Endothelial cell of umbilical vein (primary cell): ENCODE measurements at regions of chr20 and their contacts with region 1.

Region 1: DNA sequence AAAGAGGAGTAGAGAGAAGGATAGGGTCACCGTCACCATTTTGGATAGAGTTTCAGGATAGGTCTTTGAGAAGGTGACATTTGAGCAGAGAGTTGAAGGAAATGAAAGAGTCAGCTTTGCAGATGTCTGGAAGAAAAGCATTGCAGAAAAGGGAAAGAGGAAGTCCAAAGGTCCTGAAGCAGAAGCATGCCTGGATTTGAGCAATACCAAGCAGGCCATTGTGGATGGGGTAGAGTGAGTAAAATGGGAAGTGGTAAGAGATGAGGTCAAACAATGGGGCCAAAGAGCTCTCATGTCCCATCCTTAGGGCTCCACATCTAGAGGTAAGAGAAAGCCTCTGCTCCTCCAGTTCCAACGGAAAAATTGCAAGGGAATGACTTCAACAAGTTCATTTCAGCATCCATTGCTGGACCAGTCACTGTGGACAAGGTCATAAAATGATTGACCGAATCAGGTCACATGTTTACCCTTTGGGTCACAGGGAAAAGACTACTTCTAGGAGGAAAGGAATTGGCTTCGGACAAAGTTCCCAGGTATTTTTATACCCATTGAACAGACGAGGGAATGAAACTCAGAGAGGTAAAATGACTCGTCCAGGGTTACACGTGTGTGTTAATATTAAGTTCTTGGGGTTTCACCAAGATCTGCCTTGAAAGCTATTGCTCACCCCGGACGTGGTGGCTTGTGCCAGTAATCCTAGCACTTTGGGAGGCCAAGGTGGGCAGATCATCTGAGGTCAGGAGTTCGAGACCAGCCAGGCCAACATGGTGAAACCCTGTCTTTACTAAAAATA is 6.6 kb upstream of the SAMHD1 start:
- DNase-seq: no peak
- H3K4me3 ChIP-seq: no peak overlapping the region
- H3K27ac ChIP-seq: no peak overlapping the region
- H3K4me1 ChIP-seq: no peaks in the 10 kb centered on the region
- H3K27me3 ChIP-seq: no peaks in the 10 kb centered on the region
- CTCF ChIP-seq: no peak
- POLR2A ChIP-seq: no peak

Region 2: DNA sequence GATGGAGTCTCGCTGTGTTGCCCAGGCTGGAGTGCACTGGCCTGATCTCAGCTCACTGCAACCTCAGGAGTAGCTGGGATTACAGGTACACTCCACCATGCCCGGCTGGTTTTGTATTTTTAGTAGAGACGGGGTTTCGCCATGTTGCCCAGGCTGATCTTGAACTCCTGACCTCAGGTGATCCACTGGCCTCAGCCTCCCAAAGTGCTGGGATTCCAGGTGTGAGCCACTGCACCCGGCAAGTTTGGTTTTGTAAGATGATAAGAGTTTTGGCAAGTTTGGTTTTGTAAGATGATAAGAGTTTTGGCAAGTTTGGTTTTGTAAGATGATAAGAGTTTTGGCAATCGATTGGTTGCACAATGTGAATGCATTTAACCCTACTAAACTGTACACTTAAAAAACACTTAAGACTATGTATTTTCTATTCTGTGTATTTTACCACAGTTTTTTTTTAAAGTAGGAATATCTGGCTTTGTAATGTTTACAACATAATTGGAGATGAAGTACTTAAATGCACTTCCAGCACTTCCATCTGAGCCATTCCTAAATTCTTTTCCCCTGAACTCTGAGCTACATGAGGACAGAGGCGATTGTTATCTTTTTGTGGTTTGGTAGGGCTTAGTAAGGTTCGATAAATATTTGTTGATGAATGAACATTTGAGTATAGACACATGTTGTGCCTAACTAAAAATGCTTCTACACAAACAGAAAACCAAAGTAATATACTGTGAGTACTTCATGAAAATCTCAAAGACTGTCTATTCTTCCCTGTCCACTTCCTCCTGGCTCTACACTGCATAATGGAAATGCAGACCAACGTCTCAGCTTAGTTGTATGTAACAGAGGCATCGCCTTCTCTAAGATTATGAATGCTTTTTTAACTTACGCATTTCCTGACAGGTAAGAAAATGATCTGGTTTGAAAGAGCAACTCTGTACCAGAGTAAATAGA is 25.3 kb before region 1 on chr20:
- CTCF ChIA-PET with region 1: no interaction called
- POLR2A ChIA-PET with region 1: interaction called, 16 read pairs
- dilution Hi-C with region 1: no loop called
- intact Hi-C with region 1: no loop called
- DNase-seq: no peak
- H3K4me3 ChIP-seq: no peak overlapping the region
- H3K27ac ChIP-seq: no peak overlapping the region
- H3K4me1 ChIP-seq: no peaks in the 10 kb centered on the region
- H3K27me3 ChIP-seq: no peaks in the 10 kb centered on the region
- CTCF ChIP-seq: no peak
- POLR2A ChIP-seq: no peak